ENCODE measurements at regions of chrX and their contacts with region 1.

Region 1: DNA sequence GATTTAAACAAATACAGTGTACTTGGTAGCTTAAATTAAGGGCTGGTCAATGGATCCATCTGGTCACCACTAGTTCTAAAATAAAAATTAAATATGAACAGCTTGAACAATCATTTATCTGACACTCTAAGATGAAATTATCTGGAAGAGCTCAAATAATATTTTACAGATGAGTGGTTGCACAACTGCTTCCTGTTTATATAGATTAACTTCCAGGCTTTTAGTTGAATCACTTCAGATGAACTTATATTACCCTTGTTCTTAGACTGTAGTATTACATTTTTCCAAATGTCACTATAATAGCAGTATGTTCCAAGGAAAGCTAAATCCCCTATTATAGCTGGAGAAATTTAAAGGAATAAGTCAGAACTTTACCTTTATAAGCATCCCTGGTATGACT is 92.4 kb upstream of the SMIM10 start:
- DNase-seq: peak; percentile 45
- ATAC-seq: peak; percentile 54; the same call in 1 of the 2 replicates
- H3K4me3 ChIP-seq: no peak overlapping the region
- H3K27ac ChIP-seq: no peak overlapping the region
- H3K4me1 ChIP-seq: 0 out of 2 replicates have a peak, but pooled peaks cover 2% of the 10 kb centered on the region
- H3K27me3 ChIP-seq: no peaks in the 10 kb centered on the region
- CTCF ChIP-seq: no peak
- POLR2A ChIP-seq: no peak
- RAD21 ChIP-seq: no peak

Region 2: DNA sequence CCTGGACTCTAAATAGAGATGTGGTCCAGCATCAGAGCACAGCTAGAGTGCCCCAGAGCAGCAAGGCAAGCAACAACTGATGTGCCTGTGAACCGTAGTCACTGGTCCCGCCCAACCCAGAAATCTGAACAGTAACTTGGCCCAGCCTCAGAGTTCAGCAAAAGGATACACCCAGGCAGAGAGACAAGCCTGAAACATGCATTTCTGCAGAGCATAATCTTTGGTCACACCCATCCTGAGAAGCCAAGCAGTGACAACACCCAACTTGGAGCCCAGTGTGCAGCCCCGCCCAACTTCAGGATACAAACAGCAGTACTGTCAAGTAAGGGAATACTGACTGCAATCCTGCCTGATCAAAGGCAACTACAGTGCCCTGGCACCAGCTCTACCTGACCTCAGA is 582.6 kb before region 1 on chrX:
- CTCF ChIA-PET with region 1: no interaction called
- POLR2A ChIA-PET with region 1: no interaction called
- dilution Hi-C with region 1: no loop called
- in situ Hi-C with region 1: no loop called
- intact Hi-C with region 1: no loop called
- DNase-seq: no peak
- ATAC-seq: no peak
- H3K4me3 ChIP-seq: no peak overlapping the region
- H3K27ac ChIP-seq: no peak overlapping the region
- H3K4me1 ChIP-seq: no peaks in the 10 kb centered on the region
- H3K27me3 ChIP-seq: no peaks in the 10 kb centered on the region
- CTCF ChIP-seq: no peak
- POLR2A ChIP-seq: no peak
- RAD21 ChIP-seq: no peak

Region 3: GRCh38 chrX:134807039-134807731 is 91.3 kb before region 1 on chrX:
- CTCF ChIA-PET with region 1: no interaction called
- POLR2A ChIA-PET with region 1: no interaction called
- dilution Hi-C with region 1: no loop called
- in situ Hi-C with region 1: no loop called
- intact Hi-C with region 1: loop called (anchors 10 kb)
- DNase-seq: peak; percentile 95
- ATAC-seq: peak; percentile 92
- H3K4me3 ChIP-seq: peak overlapping the region; percentile 62
- H3K27ac ChIP-seq: peak overlapping the region; percentile 65
- H3K4me1 ChIP-seq: no peaks in the 10 kb centered on the region
- H3K27me3 ChIP-seq: no peaks in the 10 kb centered on the region
- CTCF ChIP-seq: no peak
- POLR2A ChIP-seq: peak; percentile 85
- RAD21 ChIP-seq: 0 out of 2 replicates have a peak, but pooled peaks have one; percentile 4

Measured in IMR-90 (cell line).